ENCODE measurements at regions of chr17 and their contacts with region 1.

Region 1: DNA sequence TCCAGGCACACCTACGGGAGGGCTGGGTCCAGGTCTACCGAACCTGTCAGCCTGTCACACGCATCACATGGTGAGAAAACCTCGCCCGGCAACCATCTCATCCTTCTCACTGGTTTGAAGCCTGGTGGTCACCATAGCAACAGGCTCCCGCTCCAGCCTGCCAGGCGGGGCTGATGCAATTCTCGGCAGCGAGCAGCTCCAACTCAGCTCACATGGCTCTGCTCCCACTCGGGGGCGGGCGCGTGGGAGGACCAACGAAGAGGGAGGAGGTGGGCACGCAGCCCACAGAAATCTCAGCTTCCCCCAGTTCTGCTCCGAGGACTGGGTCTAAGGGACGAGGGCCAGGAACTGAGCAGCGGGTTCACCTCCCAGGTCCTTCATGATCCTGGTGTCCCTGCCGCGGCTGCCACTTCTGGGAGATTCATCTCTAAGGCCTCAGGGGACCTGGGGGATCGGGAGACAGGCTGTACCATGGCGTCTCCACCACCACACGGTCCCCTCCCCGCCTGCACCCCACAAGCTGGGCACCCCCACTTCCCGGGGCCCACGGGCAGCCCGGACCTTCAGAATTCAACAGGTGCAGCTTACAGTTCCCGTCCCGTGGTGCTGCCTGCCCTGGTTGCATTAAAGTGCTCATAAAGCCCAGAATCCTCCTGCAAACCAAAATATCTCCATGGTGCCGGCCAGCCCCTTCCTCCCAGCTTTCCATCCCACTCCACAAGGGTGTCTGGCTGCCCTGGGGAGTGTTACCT is 25.8 kb downstream of the ABR start:
- DNase-seq: peak in 1 of 2 donors; percentile 64
- ATAC-seq: peak in 1 of 8 donors; percentile 26
- H3K4me3 ChIP-seq: no peak overlapping the region
- H3K27ac ChIP-seq: peak overlapping the region in 1 of 10 donors; percentile 13
- H3K4me1 ChIP-seq: peaks cover 0 to 40% (median 29%) of the 10 kb centered on the region in 9 donors
- H3K27me3 ChIP-seq: no peaks in the 10 kb centered on the region
- CTCF ChIP-seq: no peak

Region 2: GRCh38 chr17:1031711-1032110 is 122.3 kb before region 1 on chr17:
- intact Hi-C with region 1: no loop called
- DNase-seq: peak; percentile 82 to 85
- ATAC-seq: peak; percentile 56 to 81 (median 66)
- H3K4me3 ChIP-seq: peak overlapping the region in 9 of 10 donors; percentile 34 to 59 (median 55)
- H3K27ac ChIP-seq: peak overlapping the region in 8 of 10 donors; percentile 59 to 85 (median 78)
- H3K4me1 ChIP-seq: peaks cover 36 to 86% (median 64%) of the 10 kb centered on the region in 9 donors
- H3K27me3 ChIP-seq: no peaks in the 10 kb centered on the region
- CTCF ChIP-seq: no peak

Region 3: GRCh38 chr17:1186923-1187771 is 33.2 kb after region 1 on chr17:
- intact Hi-C with region 1: loop called in 1 of 10 experiments (anchors 5 kb)
- DNase-seq: peak; percentile 86 to 90
- ATAC-seq: peak; percentile 88 to 95 (median 92)
- H3K4me3 ChIP-seq: peak overlapping the region; percentile 2 to 54 (median 46)
- H3K27ac ChIP-seq: peak overlapping the region; percentile 57 to 93 (median 85)
- H3K4me1 ChIP-seq: peaks cover 25 to 74% (median 58%) of the 10 kb centered on the region in 9 donors
- H3K27me3 ChIP-seq: no peaks in the 10 kb centered on the region
- CTCF ChIP-seq: peak; percentile 97 to 99 (median 99)

Region 4: DNA sequence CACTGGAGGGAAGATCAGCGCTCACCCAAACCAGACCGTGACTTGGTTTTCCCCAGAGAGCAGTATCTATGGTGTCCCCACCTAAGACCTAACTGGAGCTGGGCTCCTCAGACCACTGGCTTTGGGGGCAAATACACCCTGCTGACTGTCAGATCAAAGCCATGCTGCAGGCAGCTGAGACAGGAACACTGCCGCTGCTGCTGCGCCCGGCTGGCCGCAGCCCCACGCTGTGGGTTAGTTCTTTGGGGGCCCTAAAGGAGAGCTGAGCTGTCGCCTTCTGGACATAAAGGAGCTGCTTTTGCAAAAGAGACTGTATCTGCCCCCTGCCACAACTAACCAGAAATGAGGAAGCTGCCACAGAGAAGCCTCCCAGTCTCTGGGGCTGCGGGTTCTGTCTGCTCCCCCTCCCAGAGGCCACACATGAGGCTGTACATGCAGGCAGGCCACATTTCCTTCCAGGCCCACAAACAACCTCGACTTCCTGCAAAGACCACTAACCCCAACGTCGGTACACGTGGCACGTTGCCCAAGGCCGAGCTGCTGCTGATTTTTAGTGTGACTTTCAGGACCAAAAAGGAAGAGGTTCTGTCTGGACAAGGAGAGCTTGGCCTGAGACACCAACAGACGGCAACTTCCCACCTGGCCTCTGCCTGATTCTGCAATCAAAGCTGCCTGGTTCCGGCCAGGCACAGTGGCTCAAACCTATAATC is 44.0 kb after region 1 on chr17:
- intact Hi-C with region 1: no loop called
- DNase-seq: peak; percentile 63 to 81
- ATAC-seq: peak; percentile 61 to 79 (median 76)
- H3K4me3 ChIP-seq: peak overlapping the region in 1 of 10 donors; percentile 15
- H3K27ac ChIP-seq: peak overlapping the region in 7 of 10 donors; percentile 3 to 90 (median 41)
- H3K4me1 ChIP-seq: peaks cover 0 to 64% (median 14%) of the 10 kb centered on the region in 9 donors
- H3K27me3 ChIP-seq: no peaks in the 10 kb centered on the region
- CTCF ChIP-seq: no peak

Measured in heart right ventricle (tissue), 16 donors.